ENCODE measurements at regions of chr4 and their contacts with region 1.

Region 1: DNA sequence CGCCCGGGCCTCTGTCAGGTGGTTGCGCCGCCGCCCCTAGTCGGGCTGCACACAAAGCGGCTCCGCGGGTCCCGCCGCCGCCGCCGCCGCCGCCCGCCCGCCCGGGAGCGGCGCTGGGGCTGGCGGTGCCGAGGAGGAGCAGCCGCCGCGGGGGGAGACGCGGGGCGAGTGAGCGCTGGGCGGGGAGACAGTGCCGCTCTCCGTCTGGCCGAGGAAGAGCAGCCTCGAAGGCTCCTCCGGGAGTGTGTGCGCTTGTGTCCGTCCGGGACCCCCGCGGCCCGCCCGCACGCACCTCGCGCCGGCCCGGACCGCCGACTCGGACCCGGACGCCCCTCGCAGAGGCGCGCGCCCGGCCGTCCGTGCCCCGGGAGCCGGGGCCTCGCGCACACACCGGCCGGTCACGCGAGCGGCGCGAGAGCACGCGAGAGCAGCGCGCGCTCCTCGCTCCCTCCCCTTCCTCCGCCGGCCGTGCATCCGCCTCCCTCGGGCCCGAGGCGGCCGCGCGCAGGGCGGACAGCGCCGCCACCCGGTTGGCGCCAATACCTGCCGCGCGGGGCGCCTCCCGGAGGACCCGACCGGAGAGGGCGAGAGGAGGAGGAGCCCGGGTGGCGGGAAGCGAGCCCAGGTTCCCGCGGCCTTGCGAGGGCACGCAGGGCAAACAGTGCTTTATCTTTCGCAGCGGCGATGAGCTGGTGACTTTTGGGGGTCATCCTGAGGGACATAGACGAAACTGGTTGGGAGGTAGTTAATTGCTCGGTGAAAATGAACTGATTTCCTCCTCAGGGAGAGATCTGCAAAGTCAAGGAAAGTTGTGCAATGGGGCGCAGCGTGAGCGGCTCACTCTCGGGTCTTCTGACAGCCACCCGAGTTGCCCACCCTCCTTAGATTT is at the start of gene PDS5A:
- DNase-seq: peak; percentile 86 to 95 (median 91)
- H3K4me3 ChIP-seq: peak within 1 kb of the TSS; percentile 22 to 66
- H3K4me3 Mint-ChIP-seq: peak within 1 kb of the TSS; percentile 87 to 92 (median 90)
- H3K27ac ChIP-seq: peak within 1 kb of the TSS; percentile 92
- H3K27ac Mint-ChIP-seq: peak within 1 kb of the TSS; percentile 95 to 97 (median 96)
- H3K4me1 ChIP-seq: peaks cover 39% of the 10 kb centered on the region
- H3K4me1 Mint-ChIP-seq: peaks cover 23 to 40% (median 31%) of the 10 kb centered on the region in 4 donors
- H3K27me3 ChIP-seq: no peaks in the 10 kb centered on the region
- H3K27me3 Mint-ChIP-seq: no peaks in the 10 kb centered on the region
- total RNA-seq, gene PDS5A: 96.9 to 97.6 TPM

Region 2: GRCh38 chr4:38804654-38805295 is 1173.0 kb before region 1 on chr4 and contains the start of gene TLR1:
- CTCF ChIA-PET with region 1: no interaction called
- POLR2A ChIA-PET with region 1: no interaction called
- intact Hi-C with region 1: loop called (anchors 10 kb)
- DNase-seq: peak in 4 of 5 donors; percentile 65 to 71 (median 65)
- H3K4me3 ChIP-seq: peak within 1 kb of the TSS; percentile 54 to 57
- H3K4me3 Mint-ChIP-seq: peak within 1 kb of the TSS; percentile 90 to 96 (median 92)
- H3K27ac ChIP-seq: peak within 1 kb of the TSS; percentile 47
- H3K27ac Mint-ChIP-seq: peak within 1 kb of the TSS; percentile 84 to 99 (median 94)
- H3K4me1 ChIP-seq: peaks cover 25% of the 10 kb centered on the region
- H3K4me1 Mint-ChIP-seq: peaks cover 24 to 45% (median 35%) of the 10 kb centered on the region in 4 donors
- H3K27me3 ChIP-seq: no peaks in the 10 kb centered on the region
- H3K27me3 Mint-ChIP-seq: no peaks in the 10 kb centered on the region
- total RNA-seq, gene TLR1: 20.6 to 24.3 TPM

Region 3: DNA sequence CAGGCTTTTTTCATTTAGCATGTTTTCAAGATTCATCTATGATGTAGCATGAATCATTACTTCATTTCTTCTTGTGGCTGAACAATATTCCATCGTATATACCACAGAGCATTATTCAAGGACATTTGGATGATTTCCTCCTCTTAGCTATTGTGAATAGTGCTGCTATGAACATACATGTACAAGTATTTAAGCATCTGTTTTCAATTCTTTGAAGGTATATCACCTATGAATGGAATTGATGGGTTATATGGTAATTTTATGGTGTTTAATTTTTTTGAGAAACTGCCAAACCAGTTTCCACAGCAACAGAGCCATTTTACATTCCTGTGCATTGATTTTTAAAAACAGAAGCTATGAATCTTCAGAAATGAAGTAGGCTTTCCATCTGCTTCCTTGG is 831.5 kb before region 1 on chr4:
- CTCF ChIA-PET with region 1: no interaction called
- POLR2A ChIA-PET with region 1: no interaction called
- intact Hi-C with region 1: no loop called
- DNase-seq: no peak
- H3K4me3 ChIP-seq: no peak overlapping the region
- H3K4me3 Mint-ChIP-seq: no peak overlapping the region
- H3K27ac ChIP-seq: no peak overlapping the region
- H3K27ac Mint-ChIP-seq: no peak overlapping the region
- H3K4me1 ChIP-seq: no peaks in the 10 kb centered on the region
- H3K4me1 Mint-ChIP-seq: no peaks in the 10 kb centered on the region
- H3K27me3 ChIP-seq: no peaks in the 10 kb centered on the region
- H3K27me3 Mint-ChIP-seq: no peaks in the 10 kb centered on the region

Region 4: DNA sequence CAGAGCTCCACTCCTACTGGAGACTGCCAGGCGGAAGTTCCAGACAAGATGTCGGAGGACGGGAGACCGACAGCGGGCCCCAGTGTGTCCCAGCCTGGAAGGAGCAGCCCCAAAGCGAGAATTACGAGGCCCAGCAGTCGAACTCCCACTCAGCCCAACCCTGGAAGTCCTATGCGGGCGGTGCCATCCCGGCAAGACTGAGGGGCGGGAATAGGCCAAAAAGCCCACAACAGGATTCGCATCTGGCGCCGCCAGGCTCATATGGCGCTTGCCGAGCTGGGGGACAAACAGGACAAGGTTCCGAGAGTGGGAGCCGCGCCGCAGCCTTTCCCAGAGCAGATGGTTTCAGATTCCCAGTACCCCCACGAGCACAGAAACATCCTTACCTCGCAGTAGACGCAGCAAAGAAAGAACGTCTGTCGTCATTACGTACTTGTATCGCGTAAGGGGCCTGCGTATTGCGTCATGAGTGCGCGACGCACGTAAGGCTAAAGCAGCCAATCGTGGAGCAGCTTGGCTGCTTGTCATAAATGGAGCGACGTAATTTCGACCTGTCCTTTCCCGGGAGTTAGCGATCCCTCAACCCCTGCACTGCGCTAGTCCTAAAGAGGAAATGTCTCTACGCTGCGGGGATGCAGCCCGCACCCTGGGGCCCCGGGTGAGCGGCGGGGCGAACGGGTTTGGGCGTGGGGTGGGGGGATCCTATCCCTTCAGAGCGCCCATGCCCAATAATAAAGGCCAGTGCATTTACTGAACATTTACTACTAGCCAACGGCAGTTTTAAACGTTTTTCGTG is 519.0 kb before region 1 on chr4 and contains the starts of genes LIAS and RPL9:
- CTCF ChIA-PET with region 1: interaction called, 6 read pairs
- POLR2A ChIA-PET with region 1: interaction called, 5 read pairs
- intact Hi-C with region 1: loop called (anchors 2 kb)
- DNase-seq: peak; percentile 92 to 96 (median 94)
- H3K4me3 ChIP-seq: peak within 1 kb of the TSS; percentile 96 to 97
- H3K4me3 Mint-ChIP-seq: peak within 1 kb of the TSS; percentile 96 to 99 (median 98)
- H3K27ac ChIP-seq: peak within 1 kb of the TSS; percentile 99
- H3K27ac Mint-ChIP-seq: peak within 1 kb of the TSS; percentile 99 to 100 (median 100)
- H3K4me1 ChIP-seq: peaks cover 33% of the 10 kb centered on the region
- H3K4me1 Mint-ChIP-seq: peaks cover 22 to 55% (median 33%) of the 10 kb centered on the region in 4 donors
- H3K27me3 ChIP-seq: no peaks in the 10 kb centered on the region
- H3K27me3 Mint-ChIP-seq: no peaks in the 10 kb centered on the region
- total RNA-seq, gene LIAS: 21.7 to 24.7 TPM
- total RNA-seq, gene RPL9: 2,318 to 2,449 TPM

Region 5: GRCh38 chr4:39638354-39639240 is 339.1 kb before region 1 on chr4 and contains the start of gene SMIM14:
- CTCF ChIA-PET with region 1: interaction called, 6 read pairs
- POLR2A ChIA-PET with region 1: interaction called, 3 read pairs
- intact Hi-C with region 1: loop called (anchors 1 kb)
- DNase-seq: peak; percentile 84 to 91 (median 86)
- H3K4me3 ChIP-seq: peak within 1 kb of the TSS; percentile 52 to 95
- H3K4me3 Mint-ChIP-seq: peak within 1 kb of the TSS; percentile 87 to 99 (median 92)
- H3K27ac ChIP-seq: peak within 1 kb of the TSS; percentile 77
- H3K27ac Mint-ChIP-seq: peak within 1 kb of the TSS; percentile 74 to 98 (median 96)
- H3K4me1 ChIP-seq: peaks cover 27% of the 10 kb centered on the region
- H3K4me1 Mint-ChIP-seq: peaks cover 20 to 54% (median 32%) of the 10 kb centered on the region in 4 donors
- H3K27me3 ChIP-seq: no peaks in the 10 kb centered on the region
- H3K27me3 Mint-ChIP-seq: no peaks in the 10 kb centered on the region
- total RNA-seq, gene SMIM14: 15.5 to 19.4 TPM

Region 6: DNA sequence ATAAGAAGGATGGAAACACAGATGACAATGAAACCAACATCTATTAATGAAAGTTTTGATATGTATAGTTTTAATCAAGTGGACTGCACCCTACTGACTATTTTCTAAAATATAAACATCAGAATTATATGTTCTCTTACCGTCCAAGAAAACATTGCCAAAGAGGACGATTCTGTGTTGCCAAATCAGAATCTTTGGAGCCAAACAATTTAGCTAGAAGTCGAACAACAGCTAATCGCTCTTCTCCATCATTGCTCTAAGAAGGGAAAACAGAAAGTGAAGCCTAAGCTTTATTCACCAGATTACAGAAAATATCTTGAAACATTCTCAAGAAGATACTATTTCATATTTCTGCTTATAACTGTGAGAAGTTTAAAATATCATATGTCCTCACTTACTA is 64.3 kb before region 1 on chr4:
- CTCF ChIA-PET with region 1: interaction called, 3 read pairs
- POLR2A ChIA-PET with region 1: no interaction called
- intact Hi-C with region 1: loop called (anchors 5 kb)
- DNase-seq: no peak
- H3K4me3 ChIP-seq: no peak overlapping the region
- H3K4me3 Mint-ChIP-seq: no peak overlapping the region
- H3K27ac ChIP-seq: no peak overlapping the region
- H3K27ac Mint-ChIP-seq: no peak overlapping the region
- H3K4me1 ChIP-seq: no peaks in the 10 kb centered on the region
- H3K4me1 Mint-ChIP-seq: peaks cover 0 to 3% (median 0%) of the 10 kb centered on the region in 4 donors
- H3K27me3 ChIP-seq: no peaks in the 10 kb centered on the region
- H3K27me3 Mint-ChIP-seq: no peaks in the 10 kb centered on the region

Region 7: DNA sequence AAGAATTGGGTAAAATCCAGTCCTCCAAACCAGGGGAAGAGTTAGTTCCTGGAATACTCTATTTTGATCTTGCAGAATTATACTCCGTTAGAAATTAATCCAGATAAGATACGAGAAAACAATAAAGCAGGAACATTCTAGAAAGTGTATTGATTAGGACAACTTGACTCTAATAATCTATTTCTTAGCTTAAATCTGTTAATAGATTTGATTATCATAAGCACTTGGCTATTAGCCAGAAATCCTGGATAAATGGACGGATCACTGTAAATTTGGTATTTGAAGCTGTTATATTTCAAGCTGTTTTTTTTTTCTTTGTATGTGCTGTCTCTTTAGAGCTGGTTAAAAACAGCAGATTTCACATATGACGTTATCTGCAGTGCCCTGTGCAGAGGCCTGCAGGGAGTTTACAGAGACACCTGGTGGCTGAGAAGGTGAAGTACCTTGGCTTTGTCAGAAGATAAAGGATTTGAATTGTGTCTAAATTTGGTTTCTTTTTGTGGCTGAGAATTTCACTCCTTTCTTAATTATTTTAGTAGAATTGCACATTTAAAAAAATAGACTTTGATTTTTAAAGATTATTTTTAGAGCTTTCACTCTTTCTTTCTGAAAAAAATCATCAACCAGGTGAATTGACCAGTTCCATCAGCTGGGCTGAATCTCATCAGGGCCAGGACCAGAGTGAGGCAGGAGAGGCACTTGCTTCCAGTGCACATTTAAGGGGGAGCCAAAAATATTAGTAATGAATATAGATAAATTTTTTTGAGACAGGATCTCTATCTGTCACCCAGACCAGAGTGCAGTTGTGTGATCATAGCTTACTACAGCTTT is 347.7 kb after region 1 on chr4:
- CTCF ChIA-PET with region 1: interaction called, 7 read pairs
- POLR2A ChIA-PET with region 1: no interaction called
- intact Hi-C with region 1: loop called (anchors 1 kb)
- DNase-seq: peak; percentile 75 to 83 (median 79)
- H3K4me3 ChIP-seq: no peak overlapping the region
- H3K4me3 Mint-ChIP-seq: no peak overlapping the region
- H3K27ac ChIP-seq: no peak overlapping the region
- H3K27ac Mint-ChIP-seq: peak overlapping the region in 5 of 7 donors; percentile 2 to 80 (median 48)
- H3K4me1 ChIP-seq: peaks cover 5% of the 10 kb centered on the region
- H3K4me1 Mint-ChIP-seq: peaks cover 5 to 17% (median 6%) of the 10 kb centered on the region in 4 donors
- H3K27me3 ChIP-seq: no peaks in the 10 kb centered on the region
- H3K27me3 Mint-ChIP-seq: peaks cover 0 to 6% of the 10 kb centered on the region in 2 donors